ENCODE measurements at regions of chr12 and their contacts with region 1.

Region 1: GRCh38 chr12:55738123-55739024 is 4.5 kb upstream of the GDF11 start:
- DNase-seq: peak; percentile 78
- H3K4me3 ChIP-seq: peak overlapping the region; percentile 66 to 98
- H3K27ac ChIP-seq: peak overlapping the region; percentile 80 to 83
- H3K4me1 ChIP-seq: peaks cover 9 to 24% of the 10 kb centered on the region in 2 experiments; a peak in 3 of 4 replicates
- H3K27me3 ChIP-seq: no peaks in the 10 kb centered on the region
- CTCF ChIP-seq: peak; percentile 85
- EP300 ChIP-seq: no peak
- RAD21 ChIP-seq: peak; percentile 96

Region 2: GRCh38 chr12:55619354-55620138 is 118.8 kb before region 1 on chr12:
- CTCF ChIA-PET with region 1: no interaction called
- POLR2A ChIA-PET with region 1: no interaction called
- DNase-seq: peak; percentile 62
- H3K4me3 ChIP-seq: no peak overlapping the region
- H3K27ac ChIP-seq: no peak overlapping the region
- H3K4me1 ChIP-seq: no peaks in the 10 kb centered on the region
- H3K27me3 ChIP-seq: peaks cover 24% of the 10 kb centered on the region; the same call in 1 of the 2 replicates
- CTCF ChIP-seq: peak; percentile 91
- EP300 ChIP-seq: no peak
- RAD21 ChIP-seq: peak; percentile 85

Region 3: DNA sequence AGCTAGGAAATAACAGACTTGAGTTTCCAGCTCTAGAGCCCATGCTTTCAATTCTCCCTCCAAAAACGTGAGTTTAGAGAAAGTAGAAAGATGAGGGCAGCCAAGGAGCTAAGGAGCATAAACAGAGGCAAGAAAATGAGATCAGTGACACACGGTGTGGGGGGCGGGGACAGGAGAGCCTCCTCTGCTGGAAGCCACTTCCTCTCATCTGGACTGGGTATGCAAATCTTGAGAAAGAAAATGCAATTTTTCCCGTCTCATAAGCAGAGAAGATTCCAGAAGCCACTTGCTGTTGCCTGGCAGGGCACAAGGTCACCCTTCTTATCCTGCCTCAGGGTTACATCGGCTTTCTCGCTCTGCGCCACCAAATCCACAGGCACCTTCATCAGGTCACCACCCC is 95.7 kb before region 1 on chr12:
- CTCF ChIA-PET with region 1: interaction called, 33 read pairs
- POLR2A ChIA-PET with region 1: no interaction called
- DNase-seq: no peak
- H3K4me3 ChIP-seq: no peak overlapping the region
- H3K27ac ChIP-seq: no peak overlapping the region
- H3K4me1 ChIP-seq: peaks cover 0 to 3% of the 10 kb centered on the region in 2 experiments; a peak in 1 of 4 replicates
- H3K27me3 ChIP-seq: peaks cover 37% of the 10 kb centered on the region
- CTCF ChIP-seq: no peak
- EP300 ChIP-seq: no peak
- RAD21 ChIP-seq: no peak

Region 4: GRCh38 chr12:55715833-55716581 is 22.4 kb before region 1 on chr12 and contains the start of gene BLOC1S1:
- CTCF ChIA-PET with region 1: interaction called, 202 read pairs
- POLR2A ChIA-PET with region 1: interaction called, 4 read pairs
- DNase-seq: peak; percentile 96
- H3K4me3 ChIP-seq: peak within 1 kb of the TSS; percentile 67 to 92
- H3K27ac ChIP-seq: peak within 1 kb of the TSS; percentile 87 to 92
- H3K4me1 ChIP-seq: peaks cover 29% of the 10 kb centered on the region in 2 experiments
- H3K27me3 ChIP-seq: no peaks in the 10 kb centered on the region
- CTCF ChIP-seq: 0 out of 2 replicates have a peak, but pooled peaks have one; percentile 9
- EP300 ChIP-seq: peak in 1 of 2 experiments; percentile 56; a peak in 1 of 4 replicates
- RAD21 ChIP-seq: no peak
- polyA plus RNA-seq, gene BLOC1S1: 277 and 331 TPM in 2 replicates

Region 5: DNA sequence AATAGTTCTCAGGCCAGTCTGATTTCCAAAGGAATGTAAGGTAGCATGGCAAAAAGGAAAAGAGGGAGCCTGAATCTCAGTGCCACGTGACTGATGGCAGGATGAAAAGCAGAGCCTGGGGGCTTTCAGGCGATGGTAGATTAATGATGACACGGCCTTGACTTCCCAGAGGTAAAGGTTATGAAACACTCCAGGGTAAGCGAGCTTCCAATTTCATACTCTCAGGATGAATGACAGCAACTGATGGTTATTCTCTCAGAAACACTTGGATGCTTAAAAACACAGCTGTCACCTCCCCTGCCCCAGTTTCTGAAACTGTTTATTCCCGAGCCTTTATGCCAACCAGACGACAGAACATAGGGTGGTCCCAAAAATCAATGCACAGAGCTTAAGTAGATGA is 33.4 kb after region 1 on chr12:
- CTCF ChIA-PET with region 1: interaction called, 14 read pairs
- POLR2A ChIA-PET with region 1: no interaction called
- DNase-seq: no peak
- H3K4me3 ChIP-seq: no peak overlapping the region
- H3K27ac ChIP-seq: no peak overlapping the region
- H3K4me1 ChIP-seq: no peaks in the 10 kb centered on the region
- H3K27me3 ChIP-seq: no peaks in the 10 kb centered on the region
- CTCF ChIP-seq: no peak
- EP300 ChIP-seq: no peak
- RAD21 ChIP-seq: no peak

Region 6: DNA sequence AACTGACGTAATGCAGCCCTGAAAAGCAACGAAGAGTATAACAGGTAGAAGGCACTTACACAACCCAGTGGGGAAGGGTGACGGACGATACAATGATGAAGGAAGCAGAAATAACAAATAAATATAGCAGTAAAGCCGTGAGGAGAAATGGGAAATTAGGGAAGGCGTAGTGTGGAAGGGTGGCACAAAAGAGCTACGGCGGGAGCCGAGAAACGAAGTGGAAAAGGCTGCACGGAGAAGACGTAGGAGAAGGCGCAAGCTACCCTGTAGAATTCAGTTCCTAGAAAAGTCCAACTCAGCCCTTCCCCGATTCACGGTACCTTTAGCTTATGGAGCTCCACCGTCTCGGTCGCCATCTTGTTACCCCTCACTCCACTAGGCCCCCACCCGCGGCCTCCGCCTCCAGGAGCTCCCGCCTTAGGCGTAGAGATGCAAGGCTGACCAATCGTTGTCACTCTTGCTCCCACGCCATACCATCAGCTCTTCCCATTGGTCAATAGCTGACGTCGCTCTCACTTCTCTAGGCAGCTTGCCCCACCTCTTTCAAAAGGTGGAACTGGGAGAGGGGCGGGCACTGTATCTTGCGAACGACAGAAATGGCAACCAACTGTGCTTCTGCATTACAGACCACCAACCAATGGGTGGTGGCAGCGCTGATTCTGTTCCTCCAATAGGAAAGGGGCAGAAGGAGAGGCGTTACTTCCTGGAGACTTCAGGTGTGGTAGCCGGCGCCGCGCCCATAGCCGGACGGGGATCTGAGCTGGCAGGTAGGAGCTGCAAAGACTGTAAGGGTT is 79.2 kb after region 1 on chr12 and contains the starts of genes ORMDL2 and SARNP:
- CTCF ChIA-PET with region 1: interaction called, 105 read pairs
- POLR2A ChIA-PET with region 1: interaction called, 7 read pairs
- DNase-seq: peak; percentile 91
- H3K4me3 ChIP-seq: peak within 1 kb of the TSS; percentile 87 to 96
- H3K27ac ChIP-seq: peak within 1 kb of the TSS; percentile 76 to 85
- H3K4me1 ChIP-seq: peaks cover 8 to 11% of the 10 kb centered on the region in 2 experiments
- H3K27me3 ChIP-seq: no peaks in the 10 kb centered on the region
- CTCF ChIP-seq: no peak
- EP300 ChIP-seq: no peak
- RAD21 ChIP-seq: no peak
- polyA plus RNA-seq, gene ORMDL2: 35.2 and 37.3 TPM in 2 replicates
- polyA plus RNA-seq, gene SARNP: 65.8 and 66.9 TPM in 2 replicates

Region 7: DNA sequence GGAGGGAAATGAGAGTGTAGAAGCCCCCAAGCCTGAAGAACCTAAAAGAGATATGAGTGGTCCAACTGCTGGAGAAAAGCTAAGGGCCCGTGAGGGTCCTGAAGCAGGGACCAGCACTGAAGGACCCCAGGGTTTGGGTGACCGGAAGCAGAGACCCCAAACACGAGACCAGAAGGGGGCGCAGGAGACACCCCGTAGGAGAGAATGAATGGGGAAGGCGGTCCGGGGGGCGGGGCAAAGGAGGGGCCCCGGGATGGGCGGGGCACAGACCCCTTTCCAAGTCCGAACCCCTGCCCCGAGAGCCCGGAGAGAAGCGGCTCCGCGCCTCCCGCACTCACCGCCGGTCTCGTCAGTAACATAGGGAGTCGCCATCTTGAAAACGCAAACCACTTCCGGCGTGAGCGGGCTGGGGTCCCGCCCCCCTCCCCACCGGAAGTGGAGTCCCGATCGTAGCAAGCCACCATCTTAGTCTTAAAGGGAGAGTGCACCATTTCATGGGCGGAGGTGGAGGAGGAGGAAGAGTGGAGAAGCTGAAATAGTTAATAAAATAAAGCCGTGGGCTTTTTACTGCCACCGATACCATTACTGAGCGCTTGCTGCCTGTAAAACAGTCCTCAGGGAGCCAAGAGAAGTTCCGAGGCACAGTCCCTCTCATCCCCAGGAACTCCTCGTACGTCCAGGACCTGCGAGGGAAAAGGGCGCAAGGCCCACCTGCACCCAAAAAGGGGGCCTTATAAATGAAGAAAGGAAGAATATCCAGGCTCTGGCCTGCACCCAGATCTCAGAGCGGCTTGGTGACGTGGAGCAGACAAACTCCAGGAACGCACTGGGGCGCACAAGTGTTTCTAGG is 188.6 kb after region 1 on chr12:
- CTCF ChIA-PET with region 1: interaction called, 51 read pairs
- POLR2A ChIA-PET with region 1: interaction called, 5 read pairs
- DNase-seq: peak; percentile 96
- H3K4me3 ChIP-seq: peak overlapping the region; percentile 90 to 94
- H3K27ac ChIP-seq: peak overlapping the region; percentile 94 to 98
- H3K4me1 ChIP-seq: peaks cover 21 to 28% of the 10 kb centered on the region in 2 experiments; a peak in 3 of 4 replicates
- H3K27me3 ChIP-seq: no peaks in the 10 kb centered on the region
- CTCF ChIP-seq: peak; percentile 97
- EP300 ChIP-seq: no peak
- RAD21 ChIP-seq: no peak; the same call in 1 of the 2 replicates

Region 8: DNA sequence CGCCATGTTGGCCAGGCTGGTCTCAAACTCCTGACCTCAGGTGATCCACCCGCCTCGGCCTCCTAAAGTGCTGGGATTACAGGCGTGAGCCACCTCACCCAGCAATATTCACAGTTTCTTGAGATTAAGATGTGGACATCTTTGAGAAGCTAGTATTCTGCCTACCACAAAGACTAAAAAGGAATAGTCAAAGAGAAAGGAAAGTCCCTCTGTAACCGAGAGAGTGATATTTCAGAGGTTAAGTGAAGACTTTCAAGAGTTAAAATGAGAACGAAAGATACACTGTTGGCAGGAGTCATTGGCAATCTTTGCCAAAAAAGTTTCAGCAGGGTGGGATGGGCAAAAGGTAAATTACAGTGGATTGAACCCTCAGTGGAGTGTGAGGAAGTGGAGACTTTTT is 208.2 kb after region 1 on chr12:
- CTCF ChIA-PET with region 1: interaction called, 96 read pairs
- POLR2A ChIA-PET with region 1: no interaction called
- DNase-seq: no peak
- H3K4me3 ChIP-seq: no peak overlapping the region
- H3K27ac ChIP-seq: no peak overlapping the region
- H3K4me1 ChIP-seq: no peaks in the 10 kb centered on the region
- H3K27me3 ChIP-seq: no peaks in the 10 kb centered on the region
- CTCF ChIP-seq: no peak
- EP300 ChIP-seq: no peak
- RAD21 ChIP-seq: no peak